Transverse colon (tissue), 4 donors: ENCODE measurements at regions of chr14 and their contacts with region 1.

Region 1: DNA sequence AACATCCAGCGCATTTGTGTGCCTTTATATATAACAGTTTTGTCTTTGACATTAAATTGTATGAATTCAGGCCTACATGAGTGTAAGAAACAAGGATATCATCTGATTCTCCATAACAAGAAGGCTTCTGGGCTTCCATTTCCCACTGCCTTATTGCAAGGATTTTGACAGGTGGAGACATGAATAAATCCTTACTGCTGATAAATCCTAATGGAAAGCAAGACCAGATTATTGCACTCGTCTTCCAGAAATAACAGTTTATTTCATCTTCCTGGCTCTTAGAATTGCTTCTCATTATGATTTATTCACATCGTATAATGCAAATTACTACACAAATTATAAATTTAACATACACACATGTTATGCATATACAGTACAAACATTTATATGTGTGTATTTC is 348.1 kb downstream of the MDGA2 start:
- DNase-seq: no peak
- H3K4me3 ChIP-seq: no peak overlapping the region
- H3K27ac ChIP-seq: no peak overlapping the region
- H3K4me1 ChIP-seq: no peaks in the 10 kb centered on the region
- H3K27me3 ChIP-seq: no peaks in the 10 kb centered on the region
- CTCF ChIP-seq: no peak
- EP300 ChIP-seq: no peak
- POLR2A ChIP-seq: no peak

Region 2: GRCh38 chr14:47567273-47567672 is 239.9 kb after region 1 on chr14:
- in situ Hi-C with region 1: no loop called
- intact Hi-C with region 1: loop called (anchors 5 kb)
- DNase-seq: no peak
- H3K4me3 ChIP-seq: no peak overlapping the region
- H3K27ac ChIP-seq: no peak overlapping the region
- H3K4me1 ChIP-seq: no peaks in the 10 kb centered on the region
- H3K27me3 ChIP-seq: no peaks in the 10 kb centered on the region
- CTCF ChIP-seq: no peak
- EP300 ChIP-seq: no peak
- POLR2A ChIP-seq: no peak

Region 3: GRCh38 chr14:47715330-47715729 is 388.0 kb after region 1 on chr14:
- in situ Hi-C with region 1: no loop called
- intact Hi-C with region 1: no loop called
- DNase-seq: no peak
- H3K4me3 ChIP-seq: no peak overlapping the region
- H3K27ac ChIP-seq: no peak overlapping the region
- H3K4me1 ChIP-seq: no peaks in the 10 kb centered on the region
- H3K27me3 ChIP-seq: no peaks in the 10 kb centered on the region
- CTCF ChIP-seq: no peak
- EP300 ChIP-seq: no peak
- POLR2A ChIP-seq: no peak